ENCODE measurements at regions of chr12 and their contacts with region 1.

Region 1: GRCh38 chr12:3202734-3203446 is 125.7 kb downstream of the TSPAN9 start:
- DNase-seq: peak in 1 of 2 donors; percentile 76
- H3K4me3 ChIP-seq: no peak overlapping the region
- H3K27ac ChIP-seq: no peak overlapping the region
- H3K4me1 ChIP-seq: peaks cover 6 to 36% of the 10 kb centered on the region in 2 donors
- H3K27me3 ChIP-seq: no peaks in the 10 kb centered on the region
- CTCF ChIP-seq: peak; percentile 79 to 94 (median 94)

Region 2: DNA sequence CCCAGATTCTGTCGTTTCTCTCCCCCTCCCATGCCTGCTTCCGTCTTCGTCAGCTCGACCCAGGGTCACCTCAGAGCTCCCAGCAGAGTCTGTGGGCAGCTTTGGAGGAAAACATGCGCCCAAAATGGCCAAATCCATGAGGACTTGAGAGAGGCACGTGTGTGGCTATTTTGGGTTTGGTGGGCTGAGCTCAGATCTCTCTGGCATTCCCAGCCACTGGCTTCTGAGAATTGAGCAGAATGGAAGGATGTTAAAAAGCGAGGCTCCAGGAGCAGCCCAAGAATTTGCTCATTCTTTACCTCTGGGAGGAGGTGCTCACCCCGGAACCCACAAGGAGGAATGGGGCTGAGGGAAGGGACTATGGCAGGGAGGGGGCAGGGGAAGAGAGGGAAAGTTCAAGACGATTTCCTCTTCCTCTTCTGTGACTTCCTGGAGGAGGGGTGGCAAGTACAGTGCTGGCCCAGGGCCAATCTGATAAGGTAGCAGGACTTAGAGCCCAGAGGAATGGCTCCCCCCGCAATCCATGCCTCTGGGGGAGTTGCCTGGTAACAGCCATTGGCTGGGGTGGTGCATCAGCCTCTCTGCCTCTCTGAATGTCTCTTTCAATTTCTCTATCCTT is 105.6 kb before region 1 on chr12:
- intact Hi-C with region 1: no loop called
- DNase-seq: peak; percentile 39 to 92
- H3K4me3 ChIP-seq: peak overlapping the region; percentile 35 to 56
- H3K27ac ChIP-seq: peak overlapping the region; percentile 85 to 93
- H3K4me1 ChIP-seq: peaks cover 0 to 25% of the 10 kb centered on the region in 2 donors
- H3K27me3 ChIP-seq: no peaks in the 10 kb centered on the region
- CTCF ChIP-seq: no peak

Region 3: GRCh38 chr12:3150931-3151835 is 51.7 kb before region 1 on chr12:
- intact Hi-C with region 1: loop called (anchors 2 kb)
- DNase-seq: no peak
- H3K4me3 ChIP-seq: peak overlapping the region; percentile 33 to 47
- H3K27ac ChIP-seq: peak overlapping the region; percentile 85 to 89
- H3K4me1 ChIP-seq: peaks cover 24 to 49% of the 10 kb centered on the region in 2 donors
- H3K27me3 ChIP-seq: no peaks in the 10 kb centered on the region
- CTCF ChIP-seq: no peak

Region 4: DNA sequence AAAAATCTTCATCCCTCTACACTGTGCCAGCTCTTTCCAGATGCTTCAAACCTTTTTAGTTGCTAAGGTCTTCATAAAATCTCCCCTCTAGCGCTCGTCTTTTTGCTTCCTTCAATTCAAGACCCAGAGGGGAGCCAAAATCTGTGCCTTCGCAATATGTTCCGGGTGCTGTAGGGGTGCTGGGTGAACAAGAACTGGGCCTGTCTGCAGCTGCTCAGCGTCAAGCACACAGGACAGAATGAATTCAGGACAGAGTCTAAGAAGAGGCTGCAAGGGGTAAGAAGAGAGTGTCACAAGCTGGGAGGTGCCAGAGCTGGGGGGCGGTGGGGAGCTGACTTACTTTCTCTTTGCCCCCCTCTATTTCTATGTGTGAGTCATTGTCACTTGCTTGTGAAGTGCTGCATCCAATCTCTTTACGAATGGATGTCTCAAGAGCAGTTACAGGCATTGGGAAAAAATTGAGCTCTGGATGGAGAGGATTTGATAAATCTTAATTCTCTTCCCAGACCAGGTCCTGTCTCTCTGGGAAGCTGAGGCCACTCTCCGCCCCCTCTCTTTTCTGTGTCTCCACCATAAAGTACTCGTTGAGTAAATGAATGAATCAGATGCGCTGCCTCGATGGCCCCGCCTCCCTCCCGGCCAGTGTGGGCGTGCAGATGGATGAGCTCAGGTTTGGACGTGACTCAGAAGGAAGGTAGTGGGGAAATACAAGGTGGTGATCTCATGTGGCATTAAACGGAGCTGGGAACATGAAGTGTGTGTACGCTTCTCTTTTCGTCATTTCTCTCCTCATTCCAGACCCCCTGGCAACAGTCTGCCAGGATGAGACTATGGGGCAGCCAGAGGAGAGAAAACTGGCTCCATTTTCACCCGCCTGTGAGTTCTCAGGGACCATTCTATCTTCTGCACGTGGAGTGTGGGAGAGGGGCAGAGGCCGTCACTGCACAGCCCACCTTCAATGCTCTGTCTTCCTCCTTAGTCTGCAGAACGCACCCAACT is 34.4 kb before region 1 on chr12:
- intact Hi-C with region 1: no loop called
- DNase-seq: no peak
- H3K4me3 ChIP-seq: no peak overlapping the region
- H3K27ac ChIP-seq: no peak overlapping the region
- H3K4me1 ChIP-seq: no peaks in the 10 kb centered on the region
- H3K27me3 ChIP-seq: no peaks in the 10 kb centered on the region
- CTCF ChIP-seq: no peak

Region 5: DNA sequence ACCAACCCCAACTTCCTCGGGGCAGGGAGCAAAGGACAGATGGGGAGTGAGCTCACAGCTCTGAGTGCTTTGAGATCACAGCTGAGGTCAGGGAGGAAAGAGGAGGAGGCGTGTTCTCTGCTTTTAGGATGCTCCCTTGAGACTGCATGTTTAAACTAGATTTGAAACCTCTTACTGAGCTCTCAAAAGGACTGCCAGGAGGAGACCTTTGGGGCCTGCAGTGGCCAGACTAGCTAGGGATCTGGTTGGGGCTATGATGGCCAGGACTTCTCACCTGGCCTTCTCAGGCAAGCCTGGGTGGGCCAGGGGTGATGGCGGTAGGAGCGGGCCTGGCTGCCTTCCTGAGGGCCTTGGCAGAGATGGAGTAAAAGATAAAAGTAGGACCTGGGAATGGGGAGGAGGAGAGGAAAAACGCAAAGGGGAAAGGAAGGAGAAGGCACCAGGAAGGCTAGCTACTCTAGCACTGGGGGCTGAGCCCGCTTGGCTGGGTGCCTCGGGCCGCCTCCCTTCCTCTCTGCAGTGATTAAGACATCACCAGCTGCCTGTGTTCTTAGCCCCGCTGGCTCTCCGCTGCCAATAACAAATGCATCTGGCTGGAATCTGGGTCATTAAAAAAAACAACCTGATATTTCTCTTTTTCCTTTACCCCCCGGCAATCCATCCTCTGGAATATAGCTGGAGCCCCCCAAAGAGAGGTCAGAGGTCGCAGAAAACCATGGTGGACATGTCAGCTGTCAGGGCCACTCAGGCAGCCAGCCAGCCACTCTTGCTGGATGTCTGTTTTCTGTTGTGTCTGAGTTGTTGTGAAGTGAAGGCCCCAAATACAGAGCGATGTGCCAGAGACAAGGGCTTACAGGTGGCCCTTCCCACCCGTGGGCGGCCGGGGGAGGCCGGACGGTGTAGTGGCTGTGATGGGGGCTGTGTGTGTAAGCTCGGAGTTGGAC is 15.6 kb after region 1 on chr12:
- intact Hi-C with region 1: no loop called
- DNase-seq: peak; percentile 76 to 92
- H3K4me3 ChIP-seq: peak overlapping the region in 1 of 2 donors; percentile 12
- H3K27ac ChIP-seq: peak overlapping the region; percentile 90 to 95
- H3K4me1 ChIP-seq: peaks cover 17 to 31% of the 10 kb centered on the region in 2 donors
- H3K27me3 ChIP-seq: no peaks in the 10 kb centered on the region
- CTCF ChIP-seq: no peak